ENCODE measurements at regions of chr1 and their contacts with region 1.

Region 1: GRCh38 chr1:170670802-170671628 is 7.1 kb downstream of the PRRX1 start:
- DNase-seq: peak; percentile 56 to 74
- ATAC-seq: peak in 7 of 8 donors; percentile 31 to 73 (median 62)
- H3K4me3 ChIP-seq: peak overlapping the region in 2 of 10 donors; percentile 2 to 9
- H3K27ac ChIP-seq: peak overlapping the region in 5 of 10 donors; percentile 4 to 98 (median 17)
- H3K4me1 ChIP-seq: peaks cover 0 to 77% (median 35%) of the 10 kb centered on the region in 9 donors
- H3K27me3 ChIP-seq: peaks cover 0 to 79% (median 16%) of the 10 kb centered on the region in 7 donors
- CTCF ChIP-seq: peak; percentile 49 to 72 (median 69)

Region 2: GRCh38 chr1:170010443-170010842 is 660.6 kb before region 1 on chr1:
- intact Hi-C with region 1: loop called in 3 of 10 experiments (anchors 10 kb)
- DNase-seq: peak in 1 of 2 donors; percentile 64
- ATAC-seq: no peak
- H3K4me3 ChIP-seq: no peak overlapping the region
- H3K27ac ChIP-seq: no peak overlapping the region
- H3K4me1 ChIP-seq: no peaks in the 10 kb centered on the region
- H3K27me3 ChIP-seq: no peaks in the 10 kb centered on the region
- CTCF ChIP-seq: peak in 8 of 9 donors; percentile 26 to 73 (median 56)

Region 3: GRCh38 chr1:170395149-170395548 is 275.9 kb before region 1 on chr1:
- intact Hi-C with region 1: no loop called
- DNase-seq: no peak
- ATAC-seq: no peak
- H3K4me3 ChIP-seq: no peak overlapping the region
- H3K27ac ChIP-seq: no peak overlapping the region
- H3K4me1 ChIP-seq: no peaks in the 10 kb centered on the region
- H3K27me3 ChIP-seq: no peaks in the 10 kb centered on the region
- CTCF ChIP-seq: no peak

Region 4: DNA sequence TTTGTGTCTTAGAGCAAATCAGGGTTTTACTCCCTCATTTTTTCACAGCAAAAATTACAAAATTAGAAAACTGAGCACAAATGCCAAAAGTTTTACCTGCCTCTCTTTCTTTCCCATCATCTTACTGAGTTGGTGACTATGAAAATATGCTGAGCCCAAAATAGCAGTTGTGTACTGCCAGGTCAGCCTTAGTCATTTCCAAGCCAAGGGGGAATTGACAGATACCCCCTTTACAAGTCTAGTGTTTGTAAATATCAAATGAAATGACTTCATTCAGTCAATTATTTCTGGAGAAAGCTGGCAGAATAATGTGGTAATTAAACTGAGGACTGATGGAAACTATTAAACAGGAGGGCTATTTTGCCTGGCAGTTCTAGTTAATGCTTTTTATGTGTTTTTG is 150.4 kb before region 1 on chr1:
- intact Hi-C with region 1: no loop called
- DNase-seq: no peak
- ATAC-seq: no peak
- H3K4me3 ChIP-seq: no peak overlapping the region
- H3K27ac ChIP-seq: no peak overlapping the region
- H3K4me1 ChIP-seq: peaks cover 0 to 7% (median 0%) of the 10 kb centered on the region in 9 donors
- H3K27me3 ChIP-seq: peaks cover 0 to 4% (median 0%) of the 10 kb centered on the region in 7 donors
- CTCF ChIP-seq: no peak

Region 5: GRCh38 chr1:170729225-170730002 is 58.4 kb after region 1 on chr1:
- intact Hi-C with region 1: loop called in 2 of 10 experiments (anchors 5 to 10 kb)
- DNase-seq: peak in 1 of 2 donors; percentile 26
- ATAC-seq: peak; percentile 70 to 96 (median 90)
- H3K4me3 ChIP-seq: no peak overlapping the region
- H3K27ac ChIP-seq: peak overlapping the region; percentile 12 to 81 (median 70)
- H3K4me1 ChIP-seq: peaks cover 5 to 62% (median 34%) of the 10 kb centered on the region in 9 donors
- H3K27me3 ChIP-seq: no peaks in the 10 kb centered on the region
- CTCF ChIP-seq: no peak

Region 6: GRCh38 chr1:170872663-170873062 is 201.6 kb after region 1 on chr1:
- intact Hi-C with region 1: loop called in 1 of 10 experiments (anchors 10 kb)
- DNase-seq: no peak
- ATAC-seq: peak in 2 of 8 donors; percentile 34 to 35
- H3K4me3 ChIP-seq: no peak overlapping the region
- H3K27ac ChIP-seq: peak overlapping the region in 1 of 10 donors; percentile 11
- H3K4me1 ChIP-seq: peaks cover 0 to 17% (median 10%) of the 10 kb centered on the region in 9 donors
- H3K27me3 ChIP-seq: no peaks in the 10 kb centered on the region
- CTCF ChIP-seq: no peak

Region 7: GRCh38 chr1:171032822-171033702 is 362.0 kb after region 1 on chr1:
- intact Hi-C with region 1: no loop called
- DNase-seq: no peak
- ATAC-seq: no peak
- H3K4me3 ChIP-seq: no peak overlapping the region
- H3K27ac ChIP-seq: no peak overlapping the region
- H3K4me1 ChIP-seq: no peaks in the 10 kb centered on the region
- H3K27me3 ChIP-seq: peaks cover 0 to 18% (median 6%) of the 10 kb centered on the region in 7 donors
- CTCF ChIP-seq: no peak

Measured in heart right ventricle (tissue), 16 donors.